Naive thymus-derived CD8-positive, alpha-beta T cell (primary cell): ENCODE measurements at regions of chr6 and their contacts with region 1.

Region 1: DNA sequence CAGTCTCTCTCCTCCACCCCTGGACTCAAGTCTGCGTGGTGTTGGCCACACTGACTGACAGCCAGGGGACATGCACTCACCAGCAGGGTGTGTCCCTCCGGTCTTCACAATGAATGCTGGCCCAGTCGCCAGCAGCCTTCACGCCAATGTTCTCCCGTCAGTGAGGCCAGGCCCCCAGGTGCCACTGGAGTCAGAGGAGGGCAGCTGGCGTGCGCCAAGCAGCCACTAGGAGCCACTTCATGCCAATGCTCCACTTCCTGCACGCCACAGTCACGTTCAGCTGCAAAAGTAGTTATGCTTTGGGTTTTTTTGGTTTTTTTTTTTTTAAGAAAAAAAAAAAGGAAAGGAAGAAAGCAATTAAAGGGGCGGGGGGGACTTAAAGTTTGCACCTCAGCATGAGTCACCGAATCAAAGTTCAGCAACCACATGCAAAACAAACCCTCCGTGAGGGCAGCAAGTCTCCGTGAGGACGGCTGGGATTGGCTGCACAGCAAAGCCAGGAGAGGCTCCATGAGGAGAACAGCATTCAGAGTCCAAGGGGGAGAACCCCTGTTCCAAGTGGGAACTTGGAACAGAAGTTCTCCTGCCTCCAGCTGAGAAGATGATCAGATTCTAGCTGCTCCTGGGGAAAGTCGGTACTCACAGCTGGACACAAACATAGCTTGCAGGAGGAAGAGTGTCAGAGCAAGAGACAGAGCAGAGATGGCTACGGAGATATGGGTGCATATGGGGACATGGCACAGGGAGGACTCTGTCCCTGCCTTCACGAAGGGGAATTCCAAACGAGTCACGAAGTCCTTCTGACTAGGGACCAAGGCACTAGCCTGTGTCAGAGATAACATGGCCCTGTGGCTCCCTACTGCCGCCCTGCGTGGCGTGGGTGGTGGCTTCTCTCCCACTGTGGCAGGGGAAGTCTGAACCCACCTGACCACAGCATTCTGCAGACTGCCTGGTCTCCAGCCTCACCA is at the start of gene ZC3H12D:
- DNase-seq: peak; percentile 59 to 95 (median 80)
- ATAC-seq: peak; percentile 76 to 85
- H3K4me3 Mint-ChIP-seq: peak within 1 kb of the TSS; percentile 84 to 99 (median 94)
- H3K27ac Mint-ChIP-seq: peak within 1 kb of the TSS; percentile 95 to 99 (median 98)
- H3K4me1 Mint-ChIP-seq: peaks cover 28 to 75% (median 53%) of the 10 kb centered on the region in 4 donors
- H3K27me3 Mint-ChIP-seq: no peaks in the 10 kb centered on the region
- polyA plus RNA-seq, gene ZC3H12D: 1.1 to 1.7 (median 1.5) TPM

Region 2: DNA sequence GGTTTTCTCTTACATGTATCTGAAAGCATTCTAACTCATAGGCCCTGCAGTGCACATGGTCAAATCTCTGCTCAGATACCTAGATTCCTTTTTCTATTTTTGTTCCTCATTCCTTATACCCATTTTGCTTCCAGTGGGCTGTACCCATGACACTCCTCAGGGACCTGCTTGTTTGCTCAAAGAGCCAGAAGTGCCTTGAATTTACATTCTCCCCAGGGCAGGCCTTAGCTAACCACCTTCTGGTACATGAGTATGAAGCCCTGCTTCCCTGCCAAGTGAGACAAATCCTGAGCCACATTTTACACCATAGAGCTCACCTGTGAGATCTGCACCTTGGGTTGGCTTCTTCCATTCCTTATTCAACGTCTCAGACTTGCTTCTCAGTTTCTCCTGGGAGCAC is 1469.0 kb before region 1 on chr6:
- POLR2A ChIA-PET with region 1: no interaction called
- DNase-seq: no peak
- ATAC-seq: no peak
- H3K4me3 Mint-ChIP-seq: no peak overlapping the region
- H3K27ac Mint-ChIP-seq: no peak overlapping the region
- H3K4me1 Mint-ChIP-seq: no peaks in the 10 kb centered on the region
- H3K27me3 Mint-ChIP-seq: peaks cover 0 to 10% (median 0%) of the 10 kb centered on the region in 5 donors

Region 3: GRCh38 chr6:149473080-149474052 is 11.7 kb before region 1 on chr6:
- POLR2A ChIA-PET with region 1: interaction called, 22 read pairs
- DNase-seq: peak in 3 of 10 donors; percentile 36 to 40 (median 37)
- ATAC-seq: peak; percentile 52 to 82
- H3K4me3 Mint-ChIP-seq: peak overlapping the region in 9 of 10 donors; percentile 21 to 74 (median 53)
- H3K27ac Mint-ChIP-seq: peak overlapping the region in 9 of 10 donors; percentile 17 to 88 (median 69)
- H3K4me1 Mint-ChIP-seq: peaks cover 11 to 77% (median 32%) of the 10 kb centered on the region in 4 donors
- H3K27me3 Mint-ChIP-seq: no peaks in the 10 kb centered on the region

Region 4: DNA sequence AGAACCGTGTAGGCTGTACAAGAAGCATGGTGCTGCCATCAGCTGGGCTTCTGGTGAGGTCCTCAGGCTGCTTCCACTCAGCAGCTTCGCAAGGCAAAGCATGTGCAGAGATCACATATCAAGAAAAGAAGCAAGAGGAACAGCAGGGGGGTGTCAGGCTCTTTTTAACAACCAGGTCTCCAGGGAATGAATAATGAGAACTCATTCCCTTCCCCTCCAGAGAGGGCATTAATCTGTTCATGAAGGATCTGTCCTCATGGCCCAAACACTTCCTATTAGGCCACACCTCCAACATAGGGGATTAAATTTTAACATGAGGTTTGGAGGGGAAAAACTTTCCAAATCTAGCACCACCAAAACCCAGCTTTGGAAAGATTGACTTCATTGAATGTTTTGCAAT is 101.1 kb after region 1 on chr6:
- POLR2A ChIA-PET with region 1: no interaction called
- DNase-seq: no peak
- ATAC-seq: no peak
- H3K4me3 Mint-ChIP-seq: no peak overlapping the region
- H3K27ac Mint-ChIP-seq: peak overlapping the region in 1 of 10 donors; percentile 26
- H3K4me1 Mint-ChIP-seq: no peaks in the 10 kb centered on the region
- H3K27me3 Mint-ChIP-seq: no peaks in the 10 kb centered on the region